ENCODE measurements at regions of chrX and their contacts with region 1.

Region 1: GRCh38 chrX:42948723-42949657 is 171.0 kb upstream of the PPP1R2C start:
- DNase-seq: peak; percentile 45
- H3K4me3 ChIP-seq: no peak overlapping the region
- H3K27ac ChIP-seq: no peak overlapping the region
- H3K4me1 ChIP-seq: peaks cover 24% of the 10 kb centered on the region
- H3K27me3 ChIP-seq: no peaks in the 10 kb centered on the region
- CTCF ChIP-seq: no peak
- POLR2A ChIP-seq: no peak

Region 2: DNA sequence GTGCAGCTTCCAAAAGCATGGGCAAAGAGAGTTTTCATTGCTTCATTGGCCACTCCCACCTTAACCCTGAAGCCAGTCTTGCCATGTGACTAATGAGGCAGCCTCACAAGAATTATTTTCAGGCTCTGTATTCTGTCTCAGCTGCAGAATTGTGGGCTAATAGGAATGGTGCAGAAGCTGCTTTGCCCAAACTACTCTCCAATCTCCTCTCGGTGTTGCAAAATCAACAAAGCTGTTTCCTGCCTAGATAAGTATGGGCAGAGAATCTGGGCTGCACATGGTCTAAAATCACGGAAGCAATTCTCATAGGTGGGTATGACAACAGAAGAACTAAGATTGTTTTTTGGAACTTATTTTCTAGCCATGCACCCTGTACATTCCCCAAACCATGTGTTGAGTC is 202.4 kb before region 1 on chrX:
- CTCF ChIA-PET with region 1: no interaction called
- POLR2A ChIA-PET with region 1: no interaction called
- dilution Hi-C with region 1: no loop called
- intact Hi-C with region 1: loop called (anchors 5 kb)
- DNase-seq: peak; percentile 86
- H3K4me3 ChIP-seq: no peak overlapping the region
- H3K27ac ChIP-seq: peak overlapping the region; percentile 20
- H3K4me1 ChIP-seq: peaks cover 26% of the 10 kb centered on the region
- H3K27me3 ChIP-seq: no peaks in the 10 kb centered on the region
- CTCF ChIP-seq: no peak
- POLR2A ChIP-seq: no peak

Region 3: GRCh38 chrX:42976729-42977366 is 27.9 kb after region 1 on chrX:
- CTCF ChIA-PET with region 1: no interaction called
- POLR2A ChIA-PET with region 1: no interaction called
- dilution Hi-C with region 1: no loop called
- intact Hi-C with region 1: loop called (anchors 5 kb)
- DNase-seq: peak; percentile 54
- H3K4me3 ChIP-seq: no peak overlapping the region
- H3K27ac ChIP-seq: peak overlapping the region; percentile 34
- H3K4me1 ChIP-seq: peaks cover 4% of the 10 kb centered on the region
- H3K27me3 ChIP-seq: no peaks in the 10 kb centered on the region
- CTCF ChIP-seq: no peak
- POLR2A ChIP-seq: no peak